PC-3 (cell line): ENCODE measurements at regions of chr15 and their contacts with region 1.

Region 1: DNA sequence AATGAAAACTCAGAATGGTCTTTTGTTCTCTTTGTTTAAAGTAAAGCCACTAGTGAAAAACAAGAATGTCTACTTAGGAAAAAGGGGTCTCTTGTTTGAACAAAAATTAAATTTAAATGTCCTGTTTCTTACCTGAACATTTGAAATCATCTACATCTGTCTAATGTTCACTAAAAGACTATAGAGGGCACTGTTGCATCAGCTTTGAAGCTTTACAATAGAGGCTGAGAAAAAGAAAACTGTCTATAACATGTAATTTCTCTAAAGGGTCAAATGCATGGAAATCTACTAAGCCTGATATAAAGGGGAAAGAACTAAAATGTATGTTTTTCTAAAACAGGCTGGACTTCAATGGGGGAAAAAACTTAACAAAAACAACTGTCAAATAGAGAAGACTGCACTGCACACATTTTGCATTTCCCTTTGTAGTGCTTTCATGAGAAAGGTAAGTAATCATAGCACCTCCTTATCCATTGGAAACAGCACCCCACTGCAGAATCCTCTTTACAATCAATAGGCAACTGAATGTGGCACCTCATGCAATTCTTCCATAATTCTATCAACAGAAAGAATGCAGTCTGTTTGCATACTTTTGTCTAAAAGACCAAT is 26.3 kb downstream of the DPH6 start:
- DNase-seq: peak; percentile 69
- ATAC-seq: peak; percentile 81
- H3K4me3 ChIP-seq: no peak overlapping the region
- H3K27ac ChIP-seq: no peak overlapping the region
- H3K4me1 ChIP-seq: no peaks in the 10 kb centered on the region
- H3K27me3 ChIP-seq: no peaks in the 10 kb centered on the region
- CTCF ChIP-seq: peak; percentile 89

Region 2: DNA sequence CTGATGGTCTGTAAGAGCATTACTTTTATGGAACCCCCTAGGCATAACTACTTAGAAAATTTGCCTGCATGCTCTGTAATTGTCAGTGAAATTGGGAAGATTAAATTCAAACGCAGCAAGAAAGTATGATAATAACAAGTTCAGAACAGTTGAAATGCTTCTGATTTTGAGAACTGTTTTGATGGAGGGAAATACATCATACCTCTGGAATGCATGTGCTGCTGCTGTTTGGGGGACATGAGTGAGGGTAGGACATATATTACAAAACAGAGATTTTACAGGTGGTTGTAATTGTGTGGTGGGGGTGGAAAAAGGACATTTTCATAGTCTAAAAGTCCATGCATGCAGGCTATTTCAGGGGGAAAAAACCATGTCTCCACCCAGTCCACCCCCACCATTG is 161.3 kb after region 1 on chr15:
- CTCF ChIA-PET with region 1: no interaction called
- POLR2A ChIA-PET with region 1: no interaction called
- intact Hi-C with region 1: no loop called
- DNase-seq: no peak
- ATAC-seq: no peak
- H3K4me3 ChIP-seq: no peak overlapping the region
- H3K27ac ChIP-seq: no peak overlapping the region
- H3K4me1 ChIP-seq: no peaks in the 10 kb centered on the region
- H3K27me3 ChIP-seq: no peaks in the 10 kb centered on the region
- CTCF ChIP-seq: no peak

Region 3: GRCh38 chr15:35912196-35912595 is 392.6 kb after region 1 on chr15:
- CTCF ChIA-PET with region 1: no interaction called
- POLR2A ChIA-PET with region 1: no interaction called
- intact Hi-C with region 1: loop called (anchors 1 kb)
- DNase-seq: peak; percentile 50
- ATAC-seq: peak; percentile 84
- H3K4me3 ChIP-seq: no peak overlapping the region
- H3K27ac ChIP-seq: no peak overlapping the region
- H3K4me1 ChIP-seq: no peaks in the 10 kb centered on the region
- H3K27me3 ChIP-seq: no peaks in the 10 kb centered on the region
- CTCF ChIP-seq: peak; percentile 57